ENCODE measurements at regions of chr5 and their contacts with region 1.

Region 1: GRCh38 chr5:14965815-14966214 is 94.2 kb upstream of the ANKH start:
- DNase-seq: no peak
- ATAC-seq: no peak
- H3K4me3 ChIP-seq: no peak overlapping the region
- H3K27ac ChIP-seq: no peak overlapping the region
- H3K4me1 ChIP-seq: no peaks in the 10 kb centered on the region
- H3K27me3 ChIP-seq: no peaks in the 10 kb centered on the region
- CTCF ChIP-seq: no peak

Region 2: GRCh38 chr5:14913096-14913495 is 52.7 kb before region 1 on chr5:
- CTCF ChIA-PET with region 1: no interaction called
- POLR2A ChIA-PET with region 1: interaction called, 11 read pairs
- in situ Hi-C with region 1: no loop called
- intact Hi-C with region 1: no loop called
- DNase-seq: no peak
- ATAC-seq: no peak
- H3K4me3 ChIP-seq: no peak overlapping the region
- H3K27ac ChIP-seq: no peak overlapping the region
- H3K4me1 ChIP-seq: no peaks in the 10 kb centered on the region
- H3K27me3 ChIP-seq: peaks cover 2% of the 10 kb centered on the region; the same call in 1 of the 2 replicates
- CTCF ChIP-seq: no peak

Measured in Panc1 (cell line).